Activated naive CD4-positive, alpha-beta T cell treated with anti-CD3 and anti-CD28 coated beads, Interleukin-2, amount 10 ng/mL, durations not matched to agents 7 days and 5 days (primary cell): ENCODE measurements at regions of chr11 and their contacts with region 1.

Region 1: DNA sequence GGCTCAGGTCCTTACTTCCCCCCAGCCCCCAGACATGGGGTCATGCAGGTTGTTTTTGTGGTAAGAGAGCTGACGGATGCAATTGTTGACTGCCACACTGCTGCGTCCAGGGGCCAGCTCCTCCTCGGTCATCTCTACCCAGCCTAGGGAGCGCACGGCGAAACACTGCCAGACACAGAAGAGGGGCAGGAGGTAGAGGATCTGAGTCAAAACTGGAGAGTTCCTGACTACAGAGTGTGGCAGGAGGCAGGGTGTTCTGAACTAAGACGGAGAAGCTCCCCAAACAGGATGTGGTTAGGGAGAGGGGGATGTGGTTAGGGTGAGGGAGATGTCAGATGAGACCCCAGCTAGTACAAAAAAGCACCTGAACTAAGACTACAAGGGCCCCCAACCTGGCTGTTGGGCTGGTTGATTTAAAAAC is 12.3 kb downstream of the SMPD1 start:
- DNase-seq: peak; percentile 93
- H3K4me3 Mint-ChIP-seq: peak overlapping the region; percentile 77
- H3K27ac Mint-ChIP-seq: peak overlapping the region; percentile 98
- H3K4me1 Mint-ChIP-seq: peaks cover 84% of the 10 kb centered on the region
- H3K27me3 Mint-ChIP-seq: peaks cover 4% of the 10 kb centered on the region

Region 2: DNA sequence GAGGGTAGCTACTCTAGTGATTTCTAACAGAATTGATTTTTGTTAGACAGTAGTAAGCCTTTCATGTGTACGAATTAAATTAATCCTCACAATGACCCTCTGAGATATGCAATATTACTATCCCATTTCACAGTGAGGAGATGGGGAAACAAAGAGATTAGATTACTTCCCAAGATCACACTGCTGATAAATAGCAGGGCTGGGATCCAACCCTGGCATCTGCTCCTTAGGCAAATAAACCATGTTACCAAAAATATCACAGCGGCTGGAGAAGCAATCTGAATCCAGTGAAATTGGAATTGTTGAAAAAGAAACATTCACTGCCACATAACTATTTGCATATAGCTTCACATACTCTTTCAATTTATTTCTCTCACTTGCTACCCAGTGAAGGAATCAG is 69.5 kb before region 1 on chr11:
- CTCF ChIA-PET with region 1: no interaction called
- DNase-seq: no peak
- H3K4me3 Mint-ChIP-seq: no peak overlapping the region
- H3K27ac Mint-ChIP-seq: no peak overlapping the region
- H3K4me1 Mint-ChIP-seq: no peaks in the 10 kb centered on the region
- H3K27me3 Mint-ChIP-seq: peaks cover 31% of the 10 kb centered on the region

Region 3: GRCh38 chr11:6389921-6390724 is 12.4 kb before region 1 on chr11 and contains the start of gene SMPD1:
- CTCF ChIA-PET with region 1: interaction called, 22 read pairs
- DNase-seq: peak; percentile 96
- H3K4me3 Mint-ChIP-seq: peak within 1 kb of the TSS; percentile 94
- H3K27ac Mint-ChIP-seq: peak within 1 kb of the TSS; percentile 94
- H3K4me1 Mint-ChIP-seq: peaks cover 57% of the 10 kb centered on the region
- H3K27me3 Mint-ChIP-seq: no peaks in the 10 kb centered on the region

Region 4: DNA sequence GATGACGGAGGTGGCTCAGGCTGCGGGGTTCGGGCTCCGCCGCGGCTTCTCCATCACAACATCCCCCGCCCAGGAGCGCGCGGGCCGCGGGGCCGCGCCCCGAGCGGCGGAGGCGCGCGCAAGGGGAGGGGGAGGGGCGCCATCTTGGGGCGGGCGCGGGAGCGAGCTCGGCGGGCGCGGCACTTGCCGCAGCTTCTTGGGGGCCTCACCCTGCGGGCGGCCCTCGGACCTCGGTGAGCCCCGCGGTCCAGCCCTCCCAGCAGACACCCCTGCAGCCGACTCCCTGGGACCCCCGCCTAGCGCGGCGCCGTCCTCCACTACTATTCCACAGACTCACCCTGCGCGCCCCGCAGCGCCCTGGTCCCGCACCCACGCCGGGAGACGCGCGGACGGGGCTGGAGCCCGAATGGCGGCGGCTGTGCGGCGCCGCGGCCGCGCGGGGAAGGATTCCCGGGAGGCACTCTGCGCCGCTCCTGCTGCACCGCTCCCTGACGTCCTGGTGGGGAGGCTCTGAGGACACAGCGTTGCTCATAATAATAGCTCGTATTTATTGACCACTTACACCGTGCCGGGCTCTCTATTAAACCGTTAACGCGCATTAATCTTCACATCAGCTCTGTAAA is 16.5 kb after region 1 on chr11 and contains the start of gene APBB1:
- CTCF ChIA-PET with region 1: interaction called, 10 read pairs
- DNase-seq: peak; percentile 74
- H3K4me3 Mint-ChIP-seq: no peak within 1 kb of the TSS
- H3K27ac Mint-ChIP-seq: peak within 1 kb of the TSS; percentile 73
- H3K4me1 Mint-ChIP-seq: peaks cover 7% of the 10 kb centered on the region
- H3K27me3 Mint-ChIP-seq: peaks cover 37% of the 10 kb centered on the region